Ovary (tissue), 10 donors: ENCODE measurements at regions of chr4 and their contacts with region 1.

Region 1: DNA sequence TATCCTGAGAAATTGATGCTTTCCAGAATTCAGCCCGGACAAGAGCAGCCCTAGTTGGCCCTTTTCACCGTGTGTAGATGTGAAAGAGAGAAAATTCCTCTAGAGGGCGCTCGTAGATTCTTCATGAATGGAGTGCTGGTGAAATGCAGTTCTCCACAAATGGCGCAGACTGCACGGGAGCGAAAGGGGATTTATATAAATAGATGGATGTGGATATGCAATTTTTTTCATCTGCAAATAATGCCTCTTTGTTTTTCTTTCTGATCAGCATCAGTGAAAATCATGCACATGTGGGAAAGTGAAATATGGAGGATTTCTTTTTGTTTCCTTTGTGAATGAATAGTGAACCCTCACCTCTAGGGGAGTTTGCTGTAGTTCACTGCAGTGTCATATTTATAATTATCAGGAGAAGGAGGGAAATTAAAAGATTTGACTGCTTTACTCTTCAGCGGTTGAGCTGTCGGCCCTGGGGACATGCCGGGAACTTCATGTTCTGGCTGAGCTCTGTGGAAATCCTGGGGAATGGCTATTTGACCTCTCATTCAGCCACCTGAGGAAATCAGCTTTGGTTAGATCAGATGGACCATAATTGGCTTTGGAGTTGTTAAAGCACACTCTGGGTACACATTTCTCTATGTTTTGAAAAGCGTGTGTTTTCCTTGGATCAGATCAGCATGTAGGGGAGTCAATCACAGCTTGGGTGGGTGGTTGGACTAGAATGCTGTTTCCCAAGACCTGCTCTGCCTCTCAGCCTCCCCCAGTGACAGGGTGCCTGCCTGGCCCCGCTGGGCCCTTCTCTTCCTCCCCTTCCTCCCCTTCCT is 115.0 kb upstream of the SHISA3 start:
- DNase-seq: peak; percentile 20 to 46 (median 25)
- H3K4me3 ChIP-seq: no peak overlapping the region
- H3K27ac ChIP-seq: no peak overlapping the region
- H3K4me1 ChIP-seq: no peaks in the 10 kb centered on the region
- H3K27me3 ChIP-seq: no peaks in the 10 kb centered on the region
- CTCF ChIP-seq: peak; percentile 51 to 56 (median 56)
- EP300 ChIP-seq: no peak
- POLR2A ChIP-seq: no peak

Region 2: GRCh38 chr4:41921476-41921875 is 360.8 kb before region 1 on chr4:
- intact Hi-C with region 1: no loop called
- DNase-seq: no peak
- H3K4me3 ChIP-seq: no peak overlapping the region
- H3K27ac ChIP-seq: no peak overlapping the region
- H3K4me1 ChIP-seq: no peaks in the 10 kb centered on the region
- H3K27me3 ChIP-seq: no peaks in the 10 kb centered on the region
- CTCF ChIP-seq: no peak
- EP300 ChIP-seq: no peak
- POLR2A ChIP-seq: no peak

Region 3: GRCh38 chr4:42331914-42332368 is 49.6 kb after region 1 on chr4:
- intact Hi-C with region 1: no loop called
- DNase-seq: no peak
- H3K4me3 ChIP-seq: no peak overlapping the region
- H3K27ac ChIP-seq: no peak overlapping the region
- H3K4me1 ChIP-seq: no peaks in the 10 kb centered on the region
- H3K27me3 ChIP-seq: no peaks in the 10 kb centered on the region
- CTCF ChIP-seq: no peak
- EP300 ChIP-seq: no peak
- POLR2A ChIP-seq: no peak

Region 4: GRCh38 chr4:42460043-42460442 is 177.8 kb after region 1 on chr4:
- intact Hi-C with region 1: no loop called
- DNase-seq: no peak
- H3K4me3 ChIP-seq: no peak overlapping the region
- H3K27ac ChIP-seq: no peak overlapping the region
- H3K4me1 ChIP-seq: no peaks in the 10 kb centered on the region
- H3K27me3 ChIP-seq: no peaks in the 10 kb centered on the region
- CTCF ChIP-seq: no peak
- EP300 ChIP-seq: no peak
- POLR2A ChIP-seq: no peak

Region 5: DNA sequence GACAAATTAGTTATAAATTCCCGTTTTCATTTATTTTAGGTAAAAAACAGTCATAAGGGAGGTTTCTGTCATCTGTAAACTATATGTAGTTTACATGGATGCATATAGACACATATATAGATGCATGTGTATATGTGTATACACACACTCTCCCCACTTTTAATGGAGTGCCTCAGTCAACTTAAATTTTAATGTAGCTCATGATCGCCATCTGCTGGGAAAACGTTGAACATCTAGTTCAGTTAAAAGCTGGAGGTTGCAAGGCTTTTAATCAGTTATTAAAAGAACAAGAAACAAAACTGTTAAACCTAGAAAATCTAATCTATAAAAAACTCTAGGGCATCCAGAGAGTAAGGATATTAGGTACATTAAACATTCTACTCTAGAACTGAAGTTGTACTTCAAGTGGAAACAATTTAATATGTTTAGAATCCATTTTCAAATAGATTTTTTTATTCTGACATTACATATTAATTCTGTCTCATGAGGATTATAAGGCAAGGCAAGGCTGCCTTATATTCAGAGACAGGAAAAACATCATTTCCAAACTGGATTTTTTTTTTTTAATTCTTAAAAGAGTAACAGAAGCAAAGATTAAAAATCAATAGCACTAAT is 237.6 kb after region 1 on chr4:
- intact Hi-C with region 1: loop called (anchors 5 to 10 kb)
- DNase-seq: peak in 3 of 5 donors; percentile 22 to 57 (median 52)
- H3K4me3 ChIP-seq: no peak overlapping the region
- H3K27ac ChIP-seq: no peak overlapping the region
- H3K4me1 ChIP-seq: peaks cover 4% of the 10 kb centered on the region
- H3K27me3 ChIP-seq: no peaks in the 10 kb centered on the region
- CTCF ChIP-seq: peak; percentile 12 to 52 (median 41)
- EP300 ChIP-seq: no peak
- POLR2A ChIP-seq: no peak